Spleen (tissue), 13 donors: ENCODE measurements at regions of chr12 and their contacts with region 1.

Region 1: DNA sequence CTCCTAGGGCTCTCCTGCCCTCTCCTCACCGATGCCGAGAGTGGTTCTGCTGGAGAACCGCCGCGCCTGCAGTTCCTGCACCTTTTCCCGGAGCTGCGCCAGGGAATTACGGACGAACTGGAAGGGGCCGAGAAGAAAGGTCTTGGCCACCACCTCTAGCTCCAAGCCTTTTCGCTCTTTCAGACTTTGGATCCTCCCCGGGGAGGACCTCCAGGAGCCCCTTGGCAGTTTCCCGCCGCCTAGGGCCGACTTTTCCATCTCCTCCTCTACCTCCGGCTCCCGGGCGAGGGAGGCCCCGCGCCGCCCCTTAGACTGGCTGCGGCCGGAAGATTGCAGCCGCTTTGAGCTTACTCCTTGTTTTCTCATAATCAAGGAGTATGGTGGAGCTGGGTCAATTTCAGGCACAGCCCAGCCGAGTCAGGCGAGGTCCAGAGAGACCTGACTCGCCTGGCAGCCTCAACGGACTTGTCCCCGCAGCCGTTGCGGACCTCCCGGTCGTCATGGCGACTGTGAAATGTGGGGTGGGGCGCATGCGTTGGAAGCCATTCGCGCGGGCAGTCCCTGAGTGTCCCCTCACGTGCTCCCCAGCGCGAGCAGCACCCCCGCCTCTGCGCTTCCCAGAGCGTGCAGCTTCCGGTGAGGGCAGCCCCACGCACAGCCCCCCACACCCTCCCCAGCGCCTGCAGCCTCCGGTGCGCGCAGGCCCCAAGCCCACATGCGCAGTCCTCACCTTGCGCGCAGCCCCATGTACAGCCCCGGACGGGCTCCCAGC is at the start of gene DPY19L2:
- DNase-seq: peak; percentile 83
- H3K4me3 ChIP-seq: peak within 1 kb of the TSS; percentile 47 to 75 (median 63)
- H3K27ac ChIP-seq: peak within 1 kb of the TSS in 7 of 8 donors; percentile 36 to 70 (median 51)
- H3K4me1 ChIP-seq: peaks cover 0 to 20% (median 11%) of the 10 kb centered on the region in 6 donors
- H3K27me3 ChIP-seq: peaks cover 0 to 27% (median 6%) of the 10 kb centered on the region in 7 donors
- CTCF ChIP-seq: no peak
- POLR2A ChIP-seq: no peak
- total RNA-seq, gene DPY19L2: 1.2 to 6.7 (median 4.6) TPM

Region 2: GRCh38 chr12:63495974-63496373 is 172.2 kb before region 1 on chr12:
- intact Hi-C with region 1: no loop called
- DNase-seq: no peak
- H3K4me3 ChIP-seq: no peak overlapping the region
- H3K27ac ChIP-seq: no peak overlapping the region
- H3K4me1 ChIP-seq: no peaks in the 10 kb centered on the region
- H3K27me3 ChIP-seq: no peaks in the 10 kb centered on the region
- CTCF ChIP-seq: no peak
- POLR2A ChIP-seq: no peak

Region 3: GRCh38 chr12:63802012-63802608 is 133.9 kb after region 1 on chr12:
- intact Hi-C with region 1: loop called (anchors 10 kb)
- DNase-seq: no peak
- H3K4me3 ChIP-seq: no peak overlapping the region
- H3K27ac ChIP-seq: no peak overlapping the region
- H3K4me1 ChIP-seq: no peaks in the 10 kb centered on the region
- H3K27me3 ChIP-seq: no peaks in the 10 kb centered on the region
- CTCF ChIP-seq: peak in 10 of 11 experiments; percentile 14 to 55 (median 36)
- POLR2A ChIP-seq: no peak

Region 4: GRCh38 chr12:63826006-63826585 is 157.9 kb after region 1 on chr12:
- intact Hi-C with region 1: no loop called
- DNase-seq: no peak
- H3K4me3 ChIP-seq: no peak overlapping the region
- H3K27ac ChIP-seq: no peak overlapping the region
- H3K4me1 ChIP-seq: peaks cover 0 to 8% (median 0%) of the 10 kb centered on the region in 6 donors
- H3K27me3 ChIP-seq: peaks cover 0 to 10% (median 0%) of the 10 kb centered on the region in 7 donors
- CTCF ChIP-seq: peak in 10 of 11 experiments; percentile 43 to 76 (median 56)
- POLR2A ChIP-seq: no peak

Region 5: GRCh38 chr12:64256166-64256800 is 588.1 kb after region 1 on chr12:
- intact Hi-C with region 1: loop called (anchors 10 kb)
- DNase-seq: no peak
- H3K4me3 ChIP-seq: no peak overlapping the region
- H3K27ac ChIP-seq: no peak overlapping the region
- H3K4me1 ChIP-seq: peaks cover 0 to 16% (median 0%) of the 10 kb centered on the region in 6 donors
- H3K27me3 ChIP-seq: no peaks in the 10 kb centered on the region
- CTCF ChIP-seq: peak in 10 of 11 experiments; percentile 38 to 71 (median 65)
- POLR2A ChIP-seq: no peak